OCI-LY7 (cell line): ENCODE measurements at regions of chr7 and their contacts with region 1.

Region 1: GRCh38 chr7:20287317-20287716 is 43.4 kb upstream of the ITGB8 start:
- DNase-seq: no peak
- H3K4me3 ChIP-seq: no peak overlapping the region
- H3K27ac ChIP-seq: no peak overlapping the region
- H3K4me1 ChIP-seq: no peaks in the 10 kb centered on the region
- CTCF ChIP-seq: no peak

Region 2: DNA sequence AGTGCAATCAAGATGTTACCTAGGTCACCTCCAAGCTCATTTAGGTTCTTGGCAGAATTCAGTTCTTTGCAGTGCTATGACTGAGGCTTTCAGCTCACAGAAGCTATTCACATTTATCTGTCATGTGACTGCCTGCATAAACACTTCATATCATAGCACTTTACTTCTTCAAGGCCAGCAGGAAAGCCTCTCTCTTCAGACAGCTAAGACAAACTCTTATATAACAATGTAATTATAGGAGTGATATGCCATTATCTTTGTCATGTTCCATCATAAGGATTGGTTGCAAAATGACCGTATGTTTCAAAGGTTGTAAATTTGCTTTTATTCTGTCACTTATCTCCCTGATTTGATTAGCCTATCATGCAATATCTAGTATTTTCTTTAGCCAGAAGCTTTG is 435.1 kb before region 1 on chr7:
- CTCF ChIA-PET with region 1: no interaction called
- POLR2A ChIA-PET with region 1: no interaction called
- intact Hi-C with region 1: no loop called
- DNase-seq: no peak
- H3K4me3 ChIP-seq: no peak overlapping the region
- H3K27ac ChIP-seq: no peak overlapping the region
- H3K4me1 ChIP-seq: no peaks in the 10 kb centered on the region
- CTCF ChIP-seq: no peak

Region 3: DNA sequence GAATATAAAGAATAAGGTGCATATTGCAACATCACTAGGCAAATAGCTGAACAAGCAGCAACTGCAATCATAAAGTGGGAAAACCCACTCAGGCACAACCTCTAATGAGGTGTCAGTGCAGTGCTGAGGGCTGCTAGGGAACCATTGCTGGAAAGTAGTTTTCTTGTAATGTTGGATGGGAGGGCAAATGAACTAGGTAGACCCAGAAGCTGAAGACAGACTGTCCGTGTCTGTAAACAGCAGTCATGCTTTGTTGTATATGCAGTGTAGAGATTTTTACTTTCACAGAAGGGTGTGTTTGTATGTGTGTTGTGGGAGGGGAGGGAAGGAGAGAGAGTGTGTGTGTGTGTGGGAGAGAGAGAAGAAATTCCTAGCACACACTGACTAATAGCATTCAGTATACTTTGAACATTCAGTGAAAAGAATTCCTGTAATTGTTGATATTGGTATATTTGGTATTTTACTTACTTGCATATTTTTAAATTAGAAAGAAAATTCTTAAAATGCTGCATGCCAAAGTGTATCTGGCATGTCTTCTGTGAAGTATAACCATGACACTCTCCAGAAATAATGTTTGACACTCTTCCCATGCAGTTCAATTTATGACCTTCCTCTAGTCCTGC is 72.1 kb after region 1 on chr7:
- CTCF ChIA-PET with region 1: no interaction called
- POLR2A ChIA-PET with region 1: interaction called, 10 read pairs
- intact Hi-C with region 1: no loop called
- DNase-seq: no peak
- H3K4me3 ChIP-seq: no peak overlapping the region
- H3K27ac ChIP-seq: no peak overlapping the region
- H3K4me1 ChIP-seq: no peaks in the 10 kb centered on the region
- CTCF ChIP-seq: no peak